IMR-90 (cell line): ENCODE measurements at regions of chr4 and their contacts with region 1.

Region 1: GRCh38 chr4:138680989-138681604 is 334.5 kb upstream of the NOCT start:
- DNase-seq: peak; percentile 79
- ATAC-seq: peak; percentile 87
- H3K4me3 ChIP-seq: no peak overlapping the region
- H3K27ac ChIP-seq: no peak overlapping the region
- H3K4me1 ChIP-seq: peaks cover 3% of the 10 kb centered on the region; the same call in 1 of the 2 replicates
- H3K27me3 ChIP-seq: no peaks in the 10 kb centered on the region
- CTCF ChIP-seq: peak; percentile 91
- POLR2A ChIP-seq: peak; percentile 36; the same call in 1 of the 2 replicates
- RAD21 ChIP-seq: peak; percentile 97

Region 2: DNA sequence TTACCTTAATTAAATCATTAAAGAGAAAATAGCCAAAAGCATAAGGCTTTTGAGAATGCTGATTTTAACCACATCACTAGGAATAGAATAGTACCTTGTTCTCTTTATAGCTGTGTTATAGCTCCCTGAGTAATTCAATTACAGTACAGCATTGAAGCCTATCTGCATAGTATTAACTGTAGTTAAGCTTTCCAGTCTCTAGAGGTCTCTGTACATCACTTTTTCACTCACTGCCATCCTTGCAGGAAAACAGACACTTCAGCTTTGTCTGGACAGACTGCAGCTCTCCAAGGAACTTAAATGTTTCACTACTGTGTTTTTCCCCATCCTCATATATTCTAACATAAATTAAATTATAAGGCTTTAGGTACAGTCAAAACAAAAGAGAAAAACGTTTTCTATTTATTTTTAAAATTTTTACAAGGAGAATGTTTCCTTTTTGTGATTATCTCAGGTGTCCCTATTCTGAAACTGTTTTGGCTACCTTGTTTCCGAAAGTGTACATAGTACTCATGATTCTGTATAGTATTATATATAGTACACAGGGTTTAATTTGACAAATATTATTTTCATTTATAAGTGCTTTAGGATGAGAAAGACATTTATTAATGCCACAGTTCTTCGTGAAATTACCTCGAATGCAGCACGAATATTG is 1556.7 kb before region 1 on chr4:
- CTCF ChIA-PET with region 1: no interaction called
- POLR2A ChIA-PET with region 1: no interaction called
- dilution Hi-C with region 1: no loop called
- in situ Hi-C with region 1: loop called (anchors 25 kb)
- intact Hi-C with region 1: loop called (anchors 2 kb)
- DNase-seq: peak; percentile 79
- ATAC-seq: peak; percentile 100
- H3K4me3 ChIP-seq: peak overlapping the region; percentile 44; the same call in 1 of the 2 replicates
- H3K27ac ChIP-seq: no peak overlapping the region
- H3K4me1 ChIP-seq: no peaks in the 10 kb centered on the region
- H3K27me3 ChIP-seq: no peaks in the 10 kb centered on the region
- CTCF ChIP-seq: peak; percentile 79
- POLR2A ChIP-seq: no peak
- RAD21 ChIP-seq: peak; percentile 88

Region 3: GRCh38 chr4:138035781-138036258 is 645.3 kb before region 1 on chr4:
- CTCF ChIA-PET with region 1: interaction called, 5 read pairs
- POLR2A ChIA-PET with region 1: no interaction called
- dilution Hi-C with region 1: no loop called
- in situ Hi-C with region 1: loop called (anchors 5 kb)
- intact Hi-C with region 1: loop called (anchors 1 kb)
- DNase-seq: peak; percentile 81
- ATAC-seq: peak; percentile 83
- H3K4me3 ChIP-seq: no peak overlapping the region
- H3K27ac ChIP-seq: peak overlapping the region; percentile 64
- H3K4me1 ChIP-seq: peaks cover 22% of the 10 kb centered on the region
- H3K27me3 ChIP-seq: no peaks in the 10 kb centered on the region
- CTCF ChIP-seq: peak; percentile 81
- POLR2A ChIP-seq: no peak
- RAD21 ChIP-seq: peak; percentile 89

Region 4: GRCh38 chr4:138182838-138183426 is 498.2 kb before region 1 on chr4:
- CTCF ChIA-PET with region 1: no interaction called
- POLR2A ChIA-PET with region 1: no interaction called
- dilution Hi-C with region 1: no loop called
- in situ Hi-C with region 1: loop called (anchors 10 kb)
- intact Hi-C with region 1: loop called (anchors 5 kb)
- DNase-seq: peak; percentile 72
- ATAC-seq: peak; percentile 31; the same call in 1 of the 2 replicates
- H3K4me3 ChIP-seq: no peak overlapping the region
- H3K27ac ChIP-seq: no peak overlapping the region
- H3K4me1 ChIP-seq: peaks cover 4% of the 10 kb centered on the region; the same call in 1 of the 2 replicates
- H3K27me3 ChIP-seq: no peaks in the 10 kb centered on the region
- CTCF ChIP-seq: peak; percentile 76
- POLR2A ChIP-seq: no peak
- RAD21 ChIP-seq: peak; percentile 76

Region 5: DNA sequence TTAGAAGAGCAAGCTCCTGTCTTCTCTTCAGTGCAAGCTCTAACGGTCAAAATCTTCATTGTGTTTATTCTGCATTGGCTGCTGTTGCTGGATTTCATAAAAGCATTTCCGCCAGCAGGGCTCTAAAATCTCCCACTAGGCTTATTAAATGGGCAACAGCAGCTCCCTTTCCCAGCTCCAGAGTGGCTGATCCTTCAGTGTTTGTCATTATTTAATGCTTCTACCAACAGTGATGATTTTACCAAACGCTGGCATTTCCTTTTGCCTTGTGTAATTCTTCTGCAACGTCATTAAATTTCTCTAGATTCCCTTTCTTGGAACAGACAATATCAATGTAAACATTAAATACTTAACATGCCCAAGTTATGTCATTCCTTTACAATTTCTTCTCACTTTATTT is 459.1 kb before region 1 on chr4:
- CTCF ChIA-PET with region 1: no interaction called
- POLR2A ChIA-PET with region 1: no interaction called
- dilution Hi-C with region 1: no loop called
- in situ Hi-C with region 1: no loop called
- intact Hi-C with region 1: loop called (anchors 5 kb)
- DNase-seq: peak; percentile 93
- ATAC-seq: peak; percentile 89
- H3K4me3 ChIP-seq: no peak overlapping the region
- H3K27ac ChIP-seq: peak overlapping the region; percentile 35
- H3K4me1 ChIP-seq: peaks cover 12% of the 10 kb centered on the region
- H3K27me3 ChIP-seq: no peaks in the 10 kb centered on the region
- CTCF ChIP-seq: 0 out of 2 replicates have a peak, but pooled peaks have one; percentile 9
- POLR2A ChIP-seq: peak; percentile 58
- RAD21 ChIP-seq: peak; percentile 28; the same call in 1 of the 2 replicates

Region 6: GRCh38 chr4:138576684-138577083 is 104.4 kb before region 1 on chr4:
- CTCF ChIA-PET with region 1: interaction called, 4 read pairs
- POLR2A ChIA-PET with region 1: no interaction called
- dilution Hi-C with region 1: no loop called
- in situ Hi-C with region 1: no loop called
- intact Hi-C with region 1: loop called (anchors 1 kb)
- DNase-seq: peak; percentile 68
- ATAC-seq: peak; percentile 82
- H3K4me3 ChIP-seq: no peak overlapping the region
- H3K27ac ChIP-seq: no peak overlapping the region
- H3K4me1 ChIP-seq: no peaks in the 10 kb centered on the region
- H3K27me3 ChIP-seq: no peaks in the 10 kb centered on the region
- CTCF ChIP-seq: peak; percentile 55
- POLR2A ChIP-seq: no peak
- RAD21 ChIP-seq: peak; percentile 82

Region 7: GRCh38 chr4:138938366-138938690 is 257.2 kb after region 1 on chr4:
- CTCF ChIA-PET with region 1: interaction called, 4 read pairs
- POLR2A ChIA-PET with region 1: no interaction called
- dilution Hi-C with region 1: no loop called
- in situ Hi-C with region 1: no loop called
- intact Hi-C with region 1: loop called (anchors 5 kb)
- DNase-seq: peak; percentile 65
- ATAC-seq: peak; percentile 96
- H3K4me3 ChIP-seq: no peak overlapping the region
- H3K27ac ChIP-seq: no peak overlapping the region
- H3K4me1 ChIP-seq: no peaks in the 10 kb centered on the region
- H3K27me3 ChIP-seq: no peaks in the 10 kb centered on the region
- CTCF ChIP-seq: peak; percentile 61
- POLR2A ChIP-seq: no peak
- RAD21 ChIP-seq: peak; percentile 81